ENCODE measurements at regions of chr17 and their contacts with region 1.

Region 1: DNA sequence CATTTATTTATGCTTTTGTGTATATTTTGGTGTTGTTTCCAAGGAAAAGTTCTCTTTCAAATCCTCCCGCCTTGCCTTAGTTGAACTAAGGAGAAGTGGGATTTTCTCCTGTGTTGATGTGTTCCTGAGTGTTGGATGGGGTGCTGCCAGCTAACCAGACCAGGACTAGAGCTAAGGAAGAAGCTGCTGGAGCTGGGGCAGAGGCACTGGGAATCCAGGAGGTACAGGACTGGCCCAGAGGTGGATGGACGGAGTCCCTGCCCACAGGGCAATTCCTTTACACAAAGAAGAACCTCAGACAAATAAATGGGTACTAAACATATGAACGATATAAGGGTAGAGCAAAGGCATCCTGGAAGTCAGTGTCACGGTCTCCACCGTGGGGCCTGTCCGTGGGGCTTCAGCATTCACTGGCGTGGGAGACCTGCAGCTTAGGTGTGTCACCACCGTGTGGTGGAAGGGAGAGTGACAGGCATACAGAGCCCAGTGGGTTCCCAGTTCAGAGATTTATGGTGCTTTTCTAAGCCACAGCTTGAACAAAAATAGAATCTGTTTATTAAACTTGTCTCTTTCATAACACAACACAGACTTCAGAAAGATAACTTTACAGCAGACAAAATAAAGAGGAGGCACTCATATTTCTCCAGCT is 270.7 kb downstream of the NTN1 start:
- DNase-seq: peak; percentile 29 to 66 (median 48)
- ATAC-seq: peak; percentile 56 to 93 (median 89)
- H3K4me3 ChIP-seq: no peak overlapping the region
- H3K27ac ChIP-seq: peak overlapping the region in 3 of 12 donors; percentile 17 to 44 (median 36)
- H3K4me1 ChIP-seq: peaks cover 0 to 14% (median 3%) of the 10 kb centered on the region in 12 donors
- H3K27me3 ChIP-seq: no peaks in the 10 kb centered on the region
- CTCF ChIP-seq: peak; percentile 53 to 86 (median 79)
- POLR2A ChIP-seq: no peak

Region 2: DNA sequence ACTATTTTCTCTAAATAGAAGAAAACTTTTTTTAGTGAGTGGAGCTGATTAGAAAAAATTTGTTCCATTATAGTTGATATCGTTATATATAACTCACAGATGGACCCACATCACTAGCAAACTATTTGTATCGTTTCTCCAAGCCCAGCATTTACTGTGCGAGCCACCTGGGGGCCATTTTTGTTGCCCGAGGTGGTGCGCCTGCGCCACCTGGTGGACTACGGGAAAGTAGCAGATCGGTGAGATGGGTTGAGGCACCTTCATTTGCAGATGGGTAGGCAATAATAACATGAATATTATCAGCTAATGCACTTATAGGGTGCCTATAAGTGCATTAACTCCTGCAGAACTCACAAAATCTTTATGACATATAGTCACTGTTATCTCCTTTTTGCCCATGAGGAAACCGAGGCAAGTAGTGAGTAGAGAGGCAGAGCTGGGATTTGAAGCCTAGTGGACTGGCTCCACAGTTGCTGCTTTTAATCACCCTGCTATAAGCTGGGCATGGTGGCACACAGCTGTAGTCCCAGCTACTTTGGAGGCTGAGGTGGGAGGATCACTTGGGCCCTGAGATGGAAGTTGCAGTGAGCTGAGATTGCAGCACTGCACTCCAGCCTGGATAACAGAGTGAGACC is 293.9 kb before region 1 on chr17:
- intact Hi-C with region 1: loop called (anchors 2 to 5 kb)
- DNase-seq: peak; percentile 38 to 82 (median 44)
- ATAC-seq: peak in 3 of 4 donors; percentile 54 to 61 (median 54)
- H3K4me3 ChIP-seq: no peak overlapping the region
- H3K27ac ChIP-seq: no peak overlapping the region
- H3K4me1 ChIP-seq: peaks cover 0 to 10% (median 2%) of the 10 kb centered on the region in 12 donors
- H3K27me3 ChIP-seq: peaks cover 0 to 30% (median 0%) of the 10 kb centered on the region in 9 donors
- CTCF ChIP-seq: peak; percentile 68 to 93 (median 78)
- POLR2A ChIP-seq: no peak

Region 3: GRCh38 chr17:9104370-9105041 is 187.5 kb before region 1 on chr17:
- intact Hi-C with region 1: loop called in 1 of 10 experiments (anchors 10 kb)
- DNase-seq: peak; percentile 57 to 89 (median 78)
- ATAC-seq: peak; percentile 94 to 96 (median 96)
- H3K4me3 ChIP-seq: peak overlapping the region in 1 of 12 donors; percentile 5
- H3K27ac ChIP-seq: peak overlapping the region in 11 of 12 donors; percentile 15 to 89 (median 67)
- H3K4me1 ChIP-seq: peaks cover 0 to 18% (median 3%) of the 10 kb centered on the region in 12 donors
- H3K27me3 ChIP-seq: no peaks in the 10 kb centered on the region
- CTCF ChIP-seq: peak in 2 of 12 donors; percentile 21 to 37
- POLR2A ChIP-seq: no peak

Region 4: GRCh38 chr17:9239793-9240658 is 52.0 kb before region 1 on chr17:
- intact Hi-C with region 1: loop called in 1 of 10 experiments (anchors 5 kb)
- DNase-seq: peak; percentile 82 to 87 (median 85)
- ATAC-seq: peak; percentile 29 to 84 (median 64)
- H3K4me3 ChIP-seq: peak overlapping the region; percentile 19 to 81 (median 65)
- H3K27ac ChIP-seq: peak overlapping the region; percentile 91 to 100 (median 96)
- H3K4me1 ChIP-seq: peaks cover 10 to 46% (median 33%) of the 10 kb centered on the region in 12 donors
- H3K27me3 ChIP-seq: no peaks in the 10 kb centered on the region
- CTCF ChIP-seq: peak in 1 of 12 donors; percentile 12
- POLR2A ChIP-seq: peak in 1 of 2 donors; percentile 63

Region 5: GRCh38 chr17:9371019-9371418 is 79.0 kb after region 1 on chr17:
- intact Hi-C with region 1: no loop called
- DNase-seq: peak in 1 of 5 donors; percentile 17
- ATAC-seq: peak; percentile 69 to 86 (median 83)
- H3K4me3 ChIP-seq: peak overlapping the region in 1 of 12 donors; percentile 11
- H3K27ac ChIP-seq: peak overlapping the region in 11 of 12 donors; percentile 5 to 87 (median 70)
- H3K4me1 ChIP-seq: peaks cover 0 to 45% (median 28%) of the 10 kb centered on the region in 12 donors
- H3K27me3 ChIP-seq: no peaks in the 10 kb centered on the region
- CTCF ChIP-seq: no peak
- POLR2A ChIP-seq: no peak

Region 6: GRCh38 chr17:9522074-9522473 is 230.0 kb after region 1 on chr17:
- intact Hi-C with region 1: loop called in 7 of 10 experiments (anchors 5 to 10 kb)
- DNase-seq: peak in 1 of 5 donors; percentile 16
- ATAC-seq: peak in 3 of 4 donors; percentile 69 to 74 (median 74)
- H3K4me3 ChIP-seq: no peak overlapping the region
- H3K27ac ChIP-seq: no peak overlapping the region
- H3K4me1 ChIP-seq: peaks cover 0 to 18% (median 4%) of the 10 kb centered on the region in 12 donors
- H3K27me3 ChIP-seq: no peaks in the 10 kb centered on the region
- CTCF ChIP-seq: peak; percentile 9 to 65 (median 48)
- POLR2A ChIP-seq: no peak

Region 7: DNA sequence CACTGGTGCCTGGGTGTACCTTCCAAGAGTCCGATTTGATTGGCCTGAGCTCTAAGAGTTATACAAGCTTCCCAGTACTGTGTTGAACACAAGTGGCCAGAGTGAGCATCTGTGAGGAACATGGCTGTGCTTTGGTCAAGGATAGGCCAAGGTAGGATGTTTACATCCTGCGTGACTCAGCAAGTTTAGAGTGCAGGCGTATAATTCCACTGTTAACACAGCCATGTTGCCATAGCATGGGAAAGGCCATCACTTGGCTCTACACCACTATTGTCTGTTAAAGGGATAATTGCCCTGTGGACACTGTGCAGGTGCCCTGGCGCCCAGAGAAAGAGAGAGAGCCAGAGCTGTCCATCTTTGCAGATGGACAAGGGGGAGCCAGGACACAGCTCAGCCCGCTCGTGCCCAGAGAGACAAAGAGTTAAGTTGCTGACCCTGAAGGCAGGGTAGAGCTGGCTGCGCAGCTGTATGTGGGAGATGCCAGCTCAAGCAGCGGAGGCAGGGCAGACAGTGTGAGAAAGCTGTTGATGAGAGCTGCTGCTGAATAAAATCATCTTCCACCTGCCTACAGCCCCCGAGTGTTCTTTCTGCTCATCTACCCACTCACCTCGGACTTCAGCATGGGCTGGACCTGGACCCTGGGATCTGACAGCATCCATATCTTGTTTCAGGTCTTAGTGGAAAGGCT is 296.1 kb after region 1 on chr17:
- intact Hi-C with region 1: no loop called
- DNase-seq: no peak
- ATAC-seq: no peak
- H3K4me3 ChIP-seq: no peak overlapping the region
- H3K27ac ChIP-seq: no peak overlapping the region
- H3K4me1 ChIP-seq: no peaks in the 10 kb centered on the region
- H3K27me3 ChIP-seq: no peaks in the 10 kb centered on the region
- CTCF ChIP-seq: no peak
- POLR2A ChIP-seq: no peak

Measured in heart left ventricle (tissue), 16 donors.